Activated naive CD4-positive, alpha-beta T cell treated with anti-CD3 and anti-CD28 coated beads for 36 hours (primary cell): ENCODE measurements at regions of chr2 and their contacts with region 1.

Region 1: GRCh38 chr2:121400201-121400600 is 115.2 kb upstream of the TFCP2L1 start:
- DNase-seq: no peak
- H3K4me3 Mint-ChIP-seq: no peak overlapping the region
- H3K27ac Mint-ChIP-seq: no peak overlapping the region
- H3K4me1 Mint-ChIP-seq: no peaks in the 10 kb centered on the region
- H3K27me3 Mint-ChIP-seq: no peaks in the 10 kb centered on the region

Region 2: DNA sequence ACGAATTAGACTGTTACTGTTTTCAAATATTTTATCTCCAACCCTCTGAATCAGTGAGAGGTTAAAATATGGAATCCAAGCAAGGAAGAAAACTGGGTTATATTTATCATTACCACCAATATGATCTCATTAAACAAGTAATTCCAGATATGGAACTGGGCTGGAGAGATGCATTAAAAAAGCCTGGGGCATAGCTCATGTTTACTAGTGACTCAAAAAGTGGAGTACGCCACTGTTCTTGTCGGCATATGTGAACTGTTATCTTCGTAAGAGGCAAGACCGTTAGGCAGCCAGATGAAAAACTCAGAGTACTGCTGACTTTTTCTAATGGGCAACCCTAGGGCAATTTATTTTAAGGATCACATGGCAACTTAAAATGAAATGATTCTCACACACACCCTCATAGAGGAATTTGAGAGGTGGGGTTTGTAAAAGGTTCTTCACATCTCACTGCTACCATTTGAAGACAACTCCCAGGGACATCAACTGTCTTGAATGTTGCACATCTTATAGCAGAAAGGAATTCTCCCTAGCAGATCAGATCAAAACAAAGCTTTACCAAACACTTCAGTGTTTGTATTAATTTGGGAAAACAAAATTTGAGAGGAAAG is 10.0 kb before region 1 on chr2:
- CTCF ChIA-PET with region 1: interaction called, 12 read pairs
- intact Hi-C with region 1: no loop called
- DNase-seq: no peak
- H3K4me3 Mint-ChIP-seq: no peak overlapping the region
- H3K27ac Mint-ChIP-seq: no peak overlapping the region
- H3K4me1 Mint-ChIP-seq: no peaks in the 10 kb centered on the region
- H3K27me3 Mint-ChIP-seq: no peaks in the 10 kb centered on the region

Region 3: DNA sequence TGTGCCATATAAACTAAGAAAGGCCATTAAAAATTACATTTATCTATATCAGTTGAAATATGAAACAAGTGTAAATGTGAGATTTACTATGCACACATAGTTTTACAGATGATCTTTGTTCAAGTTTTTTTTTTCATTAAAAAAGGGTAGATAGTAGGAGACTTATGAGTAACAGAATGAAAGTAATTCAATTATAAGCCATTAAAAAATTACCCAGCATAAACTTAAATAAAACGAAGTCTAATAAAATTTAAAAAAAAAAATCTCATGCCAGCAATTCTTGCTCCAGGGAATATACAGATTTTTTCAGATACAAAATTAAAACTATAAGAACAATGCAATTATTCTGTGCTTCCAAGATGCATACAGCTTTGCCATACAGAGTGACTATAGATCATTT is 12.1 kb after region 1 on chr2:
- CTCF ChIA-PET with region 1: interaction called, 12 read pairs
- intact Hi-C with region 1: no loop called
- DNase-seq: no peak
- H3K4me3 Mint-ChIP-seq: no peak overlapping the region
- H3K27ac Mint-ChIP-seq: no peak overlapping the region
- H3K4me1 Mint-ChIP-seq: no peaks in the 10 kb centered on the region
- H3K27me3 Mint-ChIP-seq: no peaks in the 10 kb centered on the region